Activated CD4-positive, alpha-beta memory T cell treated with anti-CD3 and anti-CD28 coated beads for 36 hours (primary cell): ENCODE measurements at regions of chrX and their contacts with region 1.

Region 1: DNA sequence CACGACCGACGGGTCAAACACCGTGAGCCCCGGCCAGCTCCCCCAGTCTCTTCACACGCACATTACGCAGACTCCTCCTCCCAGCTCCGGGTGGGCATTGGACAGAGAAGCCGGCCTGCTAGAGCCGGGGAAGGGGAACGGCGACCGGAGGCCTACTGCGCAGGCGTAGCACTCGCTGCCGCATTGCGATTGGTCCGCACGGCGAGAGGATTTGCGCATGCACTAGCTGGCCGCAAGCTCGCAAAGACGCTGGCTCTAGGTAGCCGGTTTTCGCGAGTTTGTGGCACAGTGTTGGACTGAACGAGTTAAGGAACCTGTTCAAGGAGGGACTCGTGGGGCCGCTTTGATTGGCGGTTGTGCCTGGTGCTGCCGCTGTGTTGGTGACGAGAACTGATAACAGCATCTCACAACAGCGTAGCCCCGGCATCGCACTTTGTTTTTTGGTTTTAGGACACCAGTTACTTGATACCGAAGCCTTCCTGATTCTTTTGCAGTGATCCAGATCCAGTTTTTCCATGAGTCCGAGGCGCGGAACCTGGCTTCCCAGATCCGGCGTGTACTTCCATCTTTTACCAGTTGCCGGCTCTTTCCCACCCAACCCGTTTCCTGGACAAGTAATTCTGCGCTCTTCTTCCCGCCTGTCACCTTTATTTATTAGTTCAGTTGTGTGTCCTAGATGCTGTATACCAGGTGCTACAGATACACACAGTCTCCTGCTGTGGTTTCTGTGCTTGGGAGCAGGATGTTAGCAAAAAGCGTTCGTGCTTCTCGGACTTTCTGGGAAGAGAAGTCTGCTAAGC is at the start of gene AIFM1:
- DNase-seq: peak; percentile 93
- H3K4me3 Mint-ChIP-seq: peak within 1 kb of the TSS; percentile 84
- H3K27ac Mint-ChIP-seq: peak within 1 kb of the TSS; percentile 95
- H3K4me1 Mint-ChIP-seq: peaks cover 34% of the 10 kb centered on the region
- H3K27me3 Mint-ChIP-seq: no peaks in the 10 kb centered on the region
- total RNA-seq, gene AIFM1: 60.9 to 61.2 TPM

Region 2: DNA sequence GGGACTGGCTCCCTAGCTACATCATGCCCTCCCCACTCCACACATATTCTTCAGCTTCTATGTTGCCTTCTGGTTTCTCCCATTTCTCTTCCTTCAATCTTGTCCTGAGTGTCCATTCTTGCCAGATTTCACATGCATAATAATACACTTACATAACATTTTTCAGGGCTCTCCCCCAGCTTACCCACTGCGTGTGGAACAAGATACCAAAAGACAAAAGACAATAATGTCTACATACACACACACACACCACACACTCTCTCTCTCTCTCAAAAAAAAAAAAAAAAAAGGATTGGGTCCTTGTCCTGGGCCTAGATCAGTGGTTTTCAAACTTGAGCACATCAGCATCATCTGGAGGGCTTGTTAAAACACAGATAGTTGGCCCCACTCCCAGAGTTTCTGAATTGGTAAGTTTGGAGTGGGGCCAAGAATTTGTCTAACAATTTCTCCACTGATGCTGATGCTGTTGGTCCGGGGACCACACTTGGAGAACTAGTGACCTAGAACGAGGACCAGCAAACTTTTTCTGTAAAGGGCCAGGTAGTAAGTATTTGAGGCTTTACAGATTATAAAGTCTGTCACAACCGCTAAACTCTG is 636.1 kb before region 1 on chrX:
- CTCF ChIA-PET with region 1: no interaction called
- POLR2A ChIA-PET with region 1: no interaction called
- intact Hi-C with region 1: no loop called
- DNase-seq: no peak
- H3K4me3 Mint-ChIP-seq: no peak overlapping the region
- H3K27ac Mint-ChIP-seq: no peak overlapping the region
- H3K4me1 Mint-ChIP-seq: no peaks in the 10 kb centered on the region
- H3K27me3 Mint-ChIP-seq: no peaks in the 10 kb centered on the region

Region 3: GRCh38 chrX:130110379-130111219 is 55.3 kb before region 1 on chrX and contains the start of gene ELF4:
- CTCF ChIA-PET with region 1: no interaction called
- POLR2A ChIA-PET with region 1: interaction called, 5 read pairs
- intact Hi-C with region 1: loop called (anchors 2 kb)
- DNase-seq: peak; percentile 70
- H3K4me3 Mint-ChIP-seq: peak within 1 kb of the TSS; percentile 92
- H3K27ac Mint-ChIP-seq: peak within 1 kb of the TSS; percentile 92
- H3K4me1 Mint-ChIP-seq: peaks cover 44% of the 10 kb centered on the region
- H3K27me3 Mint-ChIP-seq: no peaks in the 10 kb centered on the region
- total RNA-seq, gene ELF4: 28.0 to 28.2 TPM

Region 4: DNA sequence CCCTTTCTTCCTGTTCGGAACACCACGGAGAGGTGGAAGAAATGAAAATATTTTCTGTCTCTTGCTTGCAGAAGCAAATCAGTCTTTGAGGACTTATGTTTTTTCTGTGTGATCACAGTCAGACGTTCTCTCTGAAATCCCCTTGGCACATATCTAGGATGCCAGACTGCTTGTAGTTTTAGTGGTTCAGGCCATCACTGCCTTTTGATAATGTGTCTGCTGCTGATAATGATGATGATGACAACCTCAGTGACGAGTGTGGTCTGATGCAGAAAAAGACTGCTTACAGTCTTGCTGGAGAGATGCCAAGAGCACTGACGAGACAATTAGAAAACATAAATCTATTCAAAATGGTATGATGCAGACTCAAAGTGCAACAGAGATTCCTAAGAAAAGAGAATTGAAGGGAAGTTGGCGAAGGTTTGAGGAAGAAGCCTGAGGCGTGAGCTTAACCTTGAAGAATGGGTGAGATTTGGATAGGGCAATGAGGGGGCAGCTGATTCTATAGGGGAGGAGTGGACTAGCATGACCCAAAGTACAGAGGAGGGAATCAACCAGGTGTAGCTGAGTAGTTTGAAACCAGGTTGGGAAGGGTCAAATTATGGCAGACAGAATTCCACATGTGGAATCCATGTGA is 13.8 kb after region 1 on chrX:
- CTCF ChIA-PET with region 1: interaction called, 3 read pairs
- POLR2A ChIA-PET with region 1: no interaction called
- intact Hi-C with region 1: loop called (anchors 2 kb)
- DNase-seq: no peak
- H3K4me3 Mint-ChIP-seq: no peak overlapping the region
- H3K27ac Mint-ChIP-seq: peak overlapping the region; percentile 32
- H3K4me1 Mint-ChIP-seq: peaks cover 41% of the 10 kb centered on the region
- H3K27me3 Mint-ChIP-seq: no peaks in the 10 kb centered on the region

Region 5: DNA sequence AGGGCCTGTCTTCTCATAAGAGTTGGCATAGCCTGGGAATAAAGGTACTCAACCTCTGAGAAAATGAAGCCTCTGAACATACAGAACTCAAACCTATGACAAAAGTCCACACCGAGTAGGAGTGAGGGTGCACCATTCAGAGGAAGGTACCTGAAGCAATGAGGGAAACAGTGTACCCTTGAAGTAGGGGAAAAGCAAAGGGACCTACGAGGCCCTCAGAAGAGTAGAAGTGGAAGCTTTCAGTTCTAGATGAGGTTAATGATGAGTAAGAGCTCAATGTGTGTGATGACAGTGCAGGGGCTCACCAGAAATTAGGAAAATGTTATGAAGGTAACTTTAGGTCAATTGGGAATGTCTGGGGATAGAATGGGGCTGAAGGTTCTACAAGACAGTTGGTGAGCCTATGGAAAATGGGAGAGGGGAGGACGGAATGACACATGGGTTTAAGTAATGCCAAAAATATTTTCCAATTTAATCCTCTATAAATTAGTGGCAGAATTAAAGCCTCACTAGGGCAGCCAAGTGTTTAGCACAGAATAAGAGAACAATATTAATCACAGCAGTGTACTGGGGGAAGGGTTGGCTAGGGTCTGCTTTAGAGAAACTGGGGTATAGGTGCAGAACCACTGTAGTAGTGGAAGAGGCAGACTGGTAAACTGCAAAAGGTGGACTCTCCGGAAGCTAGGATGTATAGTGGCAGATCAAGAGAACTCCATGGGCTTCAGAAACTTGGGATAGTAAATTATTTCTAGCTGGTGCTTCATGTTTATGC is 45.7 kb after region 1 on chrX:
- CTCF ChIA-PET with region 1: no interaction called
- POLR2A ChIA-PET with region 1: interaction called, 6 read pairs
- intact Hi-C with region 1: loop called (anchors 5 kb)
- DNase-seq: peak; percentile 10
- H3K4me3 Mint-ChIP-seq: peak overlapping the region; percentile 24
- H3K27ac Mint-ChIP-seq: peak overlapping the region; percentile 97
- H3K4me1 Mint-ChIP-seq: peaks cover 27% of the 10 kb centered on the region
- H3K27me3 Mint-ChIP-seq: no peaks in the 10 kb centered on the region

Region 6: GRCh38 chrX:130401415-130402207 is 235.7 kb after region 1 on chrX and contains the start of gene RBMX2:
- CTCF ChIA-PET with region 1: no interaction called
- POLR2A ChIA-PET with region 1: no interaction called
- intact Hi-C with region 1: loop called (anchors 5 kb)
- DNase-seq: peak; percentile 76
- H3K4me3 Mint-ChIP-seq: peak within 1 kb of the TSS; percentile 83
- H3K27ac Mint-ChIP-seq: peak within 1 kb of the TSS; percentile 87
- H3K4me1 Mint-ChIP-seq: peaks cover 26% of the 10 kb centered on the region
- H3K27me3 Mint-ChIP-seq: peaks cover 6% of the 10 kb centered on the region
- total RNA-seq, gene RBMX2: 28.4 to 29.8 TPM

Region 7: DNA sequence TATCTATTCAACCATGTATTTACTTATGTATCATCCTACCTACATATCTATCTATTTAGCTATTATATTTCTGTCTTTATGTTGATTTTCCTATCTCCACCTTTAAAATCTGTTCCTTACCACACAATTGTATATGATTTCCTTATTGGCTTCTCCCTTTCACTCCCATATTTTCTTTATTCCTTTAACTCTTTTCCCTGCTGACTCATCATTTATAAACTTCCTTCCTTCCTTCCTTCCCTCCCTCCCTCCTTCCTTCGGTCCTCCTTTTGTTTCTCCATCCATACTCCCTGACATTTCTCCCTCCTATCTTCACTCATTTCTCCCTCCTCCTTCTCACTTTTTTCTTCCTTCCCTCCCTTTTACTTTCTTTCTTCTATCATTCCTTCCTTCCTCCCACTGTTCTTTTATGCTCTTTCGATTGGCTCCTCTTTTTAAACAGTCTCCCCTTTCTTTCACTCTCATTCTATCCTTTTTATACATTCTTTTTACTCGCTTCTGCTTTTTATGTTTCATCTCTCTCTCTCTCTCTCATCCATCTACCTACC is 336.2 kb after region 1 on chrX:
- CTCF ChIA-PET with region 1: no interaction called
- POLR2A ChIA-PET with region 1: no interaction called
- intact Hi-C with region 1: no loop called
- DNase-seq: no peak
- H3K4me3 Mint-ChIP-seq: no peak overlapping the region
- H3K27ac Mint-ChIP-seq: no peak overlapping the region
- H3K4me1 Mint-ChIP-seq: no peaks in the 10 kb centered on the region
- H3K27me3 Mint-ChIP-seq: no peaks in the 10 kb centered on the region